Adrenal gland (tissue), 19 donors: ENCODE measurements at regions of chr12 and their contacts with region 1.

Region 1: DNA sequence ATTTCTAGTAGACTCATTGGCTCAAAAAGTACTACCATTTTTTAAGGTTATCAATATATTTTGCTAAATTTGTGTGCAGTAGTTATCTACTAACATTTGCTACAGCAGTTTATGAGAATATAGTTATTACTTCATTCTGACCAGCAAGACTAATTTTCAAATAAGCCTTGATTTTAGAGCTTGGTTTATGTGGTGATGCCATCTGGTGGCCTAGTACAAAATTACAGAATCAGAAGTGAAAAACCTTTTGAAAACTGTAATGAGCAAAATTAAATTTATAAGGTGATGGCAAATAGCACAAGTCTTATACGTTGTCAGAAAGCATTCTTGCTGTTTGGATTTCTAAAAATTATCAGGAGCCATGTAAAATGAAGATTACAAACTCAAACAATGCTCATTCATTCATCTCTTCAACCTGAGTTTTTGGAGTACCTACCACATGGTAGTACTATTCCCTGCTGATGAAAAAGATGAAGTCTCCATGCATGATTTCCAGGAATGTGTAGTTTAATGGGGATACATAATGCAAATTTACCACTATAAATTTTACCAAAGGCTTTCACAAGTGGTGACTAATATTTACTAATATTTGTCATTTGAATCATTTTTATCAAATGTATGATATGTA is 51.0 kb downstream of the MAGOHB start:
- DNase-seq: peak in 2 of 7 donors; percentile 18 to 24
- H3K4me3 ChIP-seq: no peak overlapping the region
- H3K27ac ChIP-seq: no peak overlapping the region
- H3K4me1 ChIP-seq: no peaks in the 10 kb centered on the region
- H3K27me3 ChIP-seq: peaks cover 5% of the 10 kb centered on the region
- CTCF ChIP-seq: peak; percentile 44 to 83 (median 72)
- POLR2A ChIP-seq: no peak

Region 2: DNA sequence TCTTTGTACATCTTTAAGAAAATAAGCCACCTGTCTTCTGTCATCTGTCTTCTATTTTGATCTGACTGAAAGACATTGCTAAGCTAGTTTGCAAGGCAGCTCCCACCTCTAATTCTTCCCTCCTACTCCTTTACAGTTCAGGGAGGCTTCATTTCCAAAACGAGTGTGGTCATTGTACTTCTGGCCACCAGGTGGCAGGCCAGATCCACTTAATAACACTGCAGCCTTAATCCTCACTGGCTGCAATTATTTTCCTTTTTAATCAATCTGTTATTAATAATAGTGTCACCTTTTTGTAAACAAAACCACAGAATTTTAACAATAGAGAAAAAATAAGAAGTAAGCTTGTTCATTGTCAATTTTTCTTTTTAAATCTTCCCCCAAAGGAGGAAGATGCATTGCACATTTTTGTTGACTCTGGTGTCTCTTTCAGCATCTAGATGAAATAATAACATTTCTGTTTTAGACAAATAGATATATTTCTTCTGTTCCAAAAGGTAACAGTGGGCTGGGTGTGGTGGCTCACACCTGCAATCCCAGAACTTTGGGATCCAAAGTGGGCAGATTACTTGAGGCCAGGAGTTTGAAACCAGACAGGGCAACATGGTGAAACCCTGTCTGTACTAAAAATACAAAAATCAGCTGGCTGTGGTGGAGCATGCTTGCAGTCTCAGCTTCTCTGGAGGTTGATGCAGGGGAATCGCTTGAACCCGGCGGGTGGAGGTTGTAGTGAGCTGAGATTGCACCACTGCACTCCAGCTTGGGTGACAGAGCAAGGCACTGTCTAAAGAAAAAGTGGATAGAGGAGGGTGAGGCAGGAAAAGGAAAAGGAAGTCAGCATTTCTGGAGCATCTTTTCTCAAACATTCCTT is 326.4 kb before region 1 on chr12:
- intact Hi-C with region 1: loop called (anchors 5 kb)
- DNase-seq: peak in 2 of 7 donors; percentile 26 to 34
- H3K4me3 ChIP-seq: no peak overlapping the region
- H3K27ac ChIP-seq: no peak overlapping the region
- H3K4me1 ChIP-seq: no peaks in the 10 kb centered on the region
- H3K27me3 ChIP-seq: no peaks in the 10 kb centered on the region
- CTCF ChIP-seq: peak; percentile 77 to 88 (median 83)
- POLR2A ChIP-seq: no peak

Region 3: GRCh38 chr12:10331642-10332239 is 230.7 kb before region 1 on chr12:
- intact Hi-C with region 1: loop called (anchors 5 to 10 kb)
- DNase-seq: peak in 2 of 7 donors; percentile 9 to 12
- H3K4me3 ChIP-seq: no peak overlapping the region
- H3K27ac ChIP-seq: no peak overlapping the region
- H3K4me1 ChIP-seq: no peaks in the 10 kb centered on the region
- H3K27me3 ChIP-seq: no peaks in the 10 kb centered on the region
- CTCF ChIP-seq: peak; percentile 44 to 84 (median 72)
- POLR2A ChIP-seq: no peak